Posterior cingulate gyrus (tissue), 11 donors: ENCODE measurements at regions of chr20 and their contacts with region 1.

Region 1: GRCh38 chr20:62182613-62183425 is at the start of gene MTG2:
- DNase-seq: peak; percentile 89 to 99 (median 92)

Region 2: GRCh38 chr20:62143118-62143973 is 39.5 kb before region 1 on chr20 and contains the starts of genes PSMA7 and SS18L1:
- intact Hi-C with region 1: loop called (anchors 5 kb)
- DNase-seq: peak; percentile 73 to 98 (median 86)

Region 3: DNA sequence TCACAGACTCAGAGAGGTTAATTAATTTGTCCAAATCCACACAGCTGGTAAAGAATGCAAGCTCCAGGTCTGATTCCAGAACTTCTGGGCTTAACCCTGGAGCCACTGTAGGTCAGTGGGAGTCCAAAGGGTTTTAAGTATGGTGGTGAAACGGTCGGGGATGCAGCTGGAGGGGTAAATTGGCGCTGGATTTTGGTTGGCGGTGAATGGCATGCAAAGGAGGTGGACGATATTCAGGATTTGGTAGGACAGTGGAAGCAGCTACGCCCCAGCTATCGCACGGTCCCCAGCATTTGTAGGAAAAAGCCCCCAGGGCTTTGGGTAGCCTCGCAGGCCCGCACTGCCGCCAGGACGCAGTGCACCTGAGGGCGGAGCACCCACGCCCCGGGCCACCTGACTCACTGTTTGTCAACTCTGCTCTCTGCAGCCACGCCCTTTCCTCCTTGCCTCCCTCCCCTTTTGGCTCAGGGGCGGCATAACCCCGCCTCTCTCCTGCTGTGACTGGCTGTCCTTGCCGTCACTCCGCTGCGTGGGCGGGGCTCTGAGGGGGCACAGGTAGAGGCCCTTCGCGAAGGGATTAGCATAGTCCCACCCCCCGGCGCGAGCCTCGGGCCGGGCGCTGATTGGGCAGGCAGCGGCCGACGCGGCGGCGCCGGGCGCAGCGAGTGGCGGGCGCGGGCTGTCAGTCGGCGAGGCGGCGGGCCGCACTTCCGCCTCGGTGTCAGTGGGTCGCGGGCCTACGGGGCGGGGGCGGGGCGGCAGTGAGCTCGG is 55.2 kb after region 1 on chr20 and contains the start of gene OSBPL2:
- intact Hi-C with region 1: loop called (anchors 5 kb)
- DNase-seq: peak; percentile 99 to 100 (median 100)

Region 4: DNA sequence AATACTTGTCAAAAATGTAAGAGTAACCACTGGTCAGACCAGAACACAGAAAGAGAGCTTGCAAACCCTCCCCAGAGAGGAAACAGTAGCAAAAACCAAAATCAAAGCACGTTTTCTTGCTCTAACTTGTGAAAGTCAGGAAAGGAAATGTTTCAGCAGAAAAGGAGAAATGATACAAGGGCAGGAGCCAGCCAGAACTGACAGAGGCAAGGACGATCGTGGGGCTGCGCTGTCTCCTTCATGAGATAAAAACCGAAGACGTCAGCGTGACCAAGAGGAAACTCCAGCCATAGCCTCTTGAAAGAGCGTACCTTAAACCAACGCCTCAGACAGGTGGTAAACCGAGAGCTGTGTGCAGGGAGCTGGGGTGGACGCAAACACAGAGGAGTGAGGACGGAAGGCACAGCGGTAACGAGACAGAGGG is 156.8 kb after region 1 on chr20:
- intact Hi-C with region 1: no loop called
- DNase-seq: no peak